Endothelial cell of umbilical vein (primary cell): ENCODE measurements at regions of chr16 and their contacts with region 1.

Region 1: DNA sequence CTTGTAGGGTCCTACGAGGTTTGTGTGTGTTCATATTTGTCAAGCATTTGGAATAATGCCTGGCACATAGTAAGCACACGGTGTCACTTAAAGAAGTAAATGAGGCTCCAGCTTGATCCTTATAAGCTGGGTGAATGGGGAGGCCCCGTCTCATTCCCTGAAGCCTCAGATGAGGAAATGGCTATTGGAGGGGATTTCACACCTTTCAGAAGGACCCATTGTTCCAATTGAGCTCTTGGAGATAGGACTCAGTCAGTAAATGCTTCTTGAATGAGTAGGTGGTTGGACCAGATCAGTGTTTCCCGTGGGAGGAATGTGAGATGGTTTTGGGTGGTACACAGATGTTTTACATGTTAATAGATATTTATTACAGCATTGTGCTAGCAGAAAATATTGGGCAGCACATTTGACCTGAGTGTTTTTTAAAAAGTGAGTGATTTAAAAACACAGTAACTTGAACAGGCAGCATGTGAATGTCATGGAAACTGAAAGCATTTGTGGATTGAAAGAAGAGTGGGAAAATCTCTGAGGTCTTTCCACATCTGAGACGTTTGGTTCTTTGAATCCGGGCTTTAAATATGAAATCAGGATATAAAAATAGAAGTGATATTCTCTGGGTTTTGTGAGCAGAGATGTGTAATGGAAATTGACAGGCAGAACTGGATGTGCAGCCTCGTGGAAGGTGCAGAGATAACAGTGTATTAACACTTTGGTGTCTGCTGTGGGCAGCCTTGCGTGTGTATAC is 36.4 kb upstream of the ARHGAP17 start:
- DNase-seq: peak; percentile 31
- H3K4me3 ChIP-seq: no peak overlapping the region
- H3K27ac ChIP-seq: no peak overlapping the region
- H3K4me1 ChIP-seq: peaks cover 20% of the 10 kb centered on the region
- H3K27me3 ChIP-seq: no peaks in the 10 kb centered on the region
- CTCF ChIP-seq: no peak
- POLR2A ChIP-seq: no peak

Region 2: GRCh38 chr16:24834459-24835335 is 216.9 kb before region 1 on chr16:
- CTCF ChIA-PET with region 1: interaction called, 6 read pairs
- POLR2A ChIA-PET with region 1: no interaction called
- dilution Hi-C with region 1: no loop called
- intact Hi-C with region 1: loop called (anchors 10 kb)
- DNase-seq: peak; percentile 52
- H3K4me3 ChIP-seq: no peak overlapping the region
- H3K27ac ChIP-seq: no peak overlapping the region
- H3K4me1 ChIP-seq: peaks cover 12% of the 10 kb centered on the region
- H3K27me3 ChIP-seq: no peaks in the 10 kb centered on the region
- CTCF ChIP-seq: peak; percentile 44 to 64
- POLR2A ChIP-seq: no peak

Region 3: GRCh38 chr16:25014500-25015147 is 37.0 kb before region 1 on chr16:
- CTCF ChIA-PET with region 1: interaction called, 5 read pairs
- POLR2A ChIA-PET with region 1: interaction called, 4 read pairs
- dilution Hi-C with region 1: no loop called
- intact Hi-C with region 1: loop called (anchors 1 kb)
- DNase-seq: peak; percentile 59
- H3K4me3 ChIP-seq: peak overlapping the region; percentile 75 to 99 (median 97)
- H3K27ac ChIP-seq: peak overlapping the region; percentile 56
- H3K4me1 ChIP-seq: peaks cover 35% of the 10 kb centered on the region
- H3K27me3 ChIP-seq: no peaks in the 10 kb centered on the region
- CTCF ChIP-seq: no peak
- POLR2A ChIP-seq: peak; percentile 2

Region 4: DNA sequence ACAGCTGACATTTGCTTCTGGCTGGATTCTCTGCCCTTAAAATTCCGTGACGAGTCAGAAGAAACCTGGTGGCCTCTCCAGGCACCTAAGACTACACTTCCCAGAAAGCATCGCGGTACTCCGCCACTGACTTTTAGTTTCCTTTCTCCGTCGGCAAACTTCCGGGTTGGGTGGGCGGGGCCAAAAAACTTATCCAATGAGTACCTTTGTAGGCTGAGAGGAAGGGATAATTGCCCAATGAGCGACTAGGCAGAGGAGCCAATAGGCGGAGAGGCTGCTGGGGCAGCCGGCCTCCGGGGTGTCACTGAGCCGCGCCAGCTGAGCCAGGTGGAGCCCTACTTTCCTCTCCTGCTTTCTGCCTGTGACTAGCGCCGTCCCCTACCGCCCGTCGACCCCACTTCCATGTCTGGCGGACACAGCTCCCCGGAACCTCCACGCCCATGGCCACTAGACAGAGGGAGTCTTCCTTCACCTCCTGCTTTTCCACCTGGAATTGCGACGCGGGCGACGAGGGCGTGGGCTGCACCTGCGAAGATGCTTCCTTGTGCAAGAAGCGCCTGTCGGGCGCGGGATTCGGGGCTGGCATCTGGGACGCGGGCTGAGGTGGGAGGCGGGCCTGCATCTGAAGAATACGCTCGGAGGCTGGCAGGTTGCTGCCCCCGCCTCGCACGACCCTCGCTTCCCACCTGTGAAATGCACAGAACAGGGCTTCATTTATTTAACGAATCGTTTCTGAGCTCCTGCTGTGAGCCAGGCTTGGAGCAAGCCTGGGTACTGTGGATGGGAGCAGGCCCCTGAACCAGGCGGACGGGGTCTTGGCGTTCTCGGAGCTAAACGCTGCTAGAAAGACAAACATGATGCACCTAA is 19.9 kb before region 1 on chr16:
- CTCF ChIA-PET with region 1: interaction called, 6 read pairs
- POLR2A ChIA-PET with region 1: interaction called, 4 read pairs
- dilution Hi-C with region 1: no loop called
- intact Hi-C with region 1: loop called (anchors 1 kb)
- DNase-seq: peak; percentile 96
- H3K4me3 ChIP-seq: peak overlapping the region; percentile 85 to 97 (median 93)
- H3K27ac ChIP-seq: peak overlapping the region; percentile 35
- H3K4me1 ChIP-seq: peaks cover 6% of the 10 kb centered on the region
- H3K27me3 ChIP-seq: no peaks in the 10 kb centered on the region
- CTCF ChIP-seq: no peak
- POLR2A ChIP-seq: peak; percentile 72

Region 5: GRCh38 chr16:25126820-25127232 is 75.2 kb after region 1 on chr16:
- CTCF ChIA-PET with region 1: no interaction called
- POLR2A ChIA-PET with region 1: no interaction called
- dilution Hi-C with region 1: no loop called
- intact Hi-C with region 1: loop called (anchors 1 kb)
- DNase-seq: peak; percentile 58
- H3K4me3 ChIP-seq: no peak overlapping the region
- H3K27ac ChIP-seq: no peak overlapping the region
- H3K4me1 ChIP-seq: no peaks in the 10 kb centered on the region
- H3K27me3 ChIP-seq: no peaks in the 10 kb centered on the region
- CTCF ChIP-seq: peak; percentile 48 to 49
- POLR2A ChIP-seq: no peak